Breast epithelium (tissue), 4 donors: ENCODE measurements at regions of chr9 and their contacts with region 1.

Region 1: DNA sequence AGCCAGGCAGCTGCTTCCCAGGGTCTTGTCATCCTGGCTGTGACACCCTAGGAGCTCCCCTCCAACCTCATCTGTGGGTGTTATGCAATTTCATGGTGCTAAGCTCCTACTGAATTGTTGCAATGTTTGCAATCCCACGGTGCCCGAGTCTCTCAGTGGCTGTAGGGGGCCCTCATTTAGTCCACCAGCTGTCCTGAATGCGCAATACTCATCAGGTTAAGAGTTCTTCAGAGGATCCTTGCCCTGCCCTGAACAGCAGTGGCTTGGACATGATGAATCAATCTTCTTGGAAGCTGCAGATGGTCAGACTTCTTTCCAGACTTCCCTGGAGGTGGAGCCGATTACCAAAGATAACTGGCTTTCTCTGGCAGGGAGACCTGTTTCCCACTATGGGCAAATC is 584.1 kb downstream of the CCDC171 start:
- DNase-seq: no peak
- H3K4me3 ChIP-seq: no peak overlapping the region
- H3K27ac ChIP-seq: no peak overlapping the region
- H3K4me1 ChIP-seq: no peaks in the 10 kb centered on the region
- H3K27me3 ChIP-seq: no peaks in the 10 kb centered on the region
- CTCF ChIP-seq: no peak
- POLR2A ChIP-seq: no peak

Region 2: DNA sequence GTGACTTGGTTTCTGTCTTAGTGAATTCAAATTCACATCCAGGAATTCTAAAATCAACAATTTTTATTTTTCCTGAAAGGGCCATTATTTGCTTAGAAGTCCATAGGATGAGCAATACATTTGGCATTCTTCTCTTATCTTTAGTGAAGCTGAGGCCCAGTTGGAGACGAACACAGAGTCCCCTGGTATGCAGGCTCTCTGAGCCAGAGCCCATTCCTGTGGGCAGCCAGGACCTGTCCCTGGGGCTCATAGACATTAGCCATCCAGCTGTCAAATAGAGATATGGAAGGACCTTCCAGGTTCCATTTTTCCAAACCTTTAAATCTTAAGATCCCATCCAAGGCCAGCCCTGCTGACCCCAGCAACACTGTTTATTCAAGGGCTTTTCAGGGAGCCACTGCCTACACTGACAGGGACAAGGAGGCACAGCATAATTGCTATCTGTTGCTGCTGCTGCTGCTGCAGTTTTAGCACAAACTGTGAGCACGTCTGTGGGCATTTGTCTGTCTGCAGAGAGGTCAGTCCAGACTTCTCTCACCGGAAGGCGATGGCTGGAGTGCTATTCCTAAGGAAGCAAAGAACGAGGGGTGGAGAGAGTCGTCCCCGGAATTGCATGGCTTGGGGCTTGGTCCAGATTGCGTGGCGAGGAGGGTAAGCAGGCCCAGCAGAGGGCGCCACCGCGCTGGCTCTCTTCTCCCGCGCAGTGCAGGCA is 54.9 kb after region 1 on chr9:
- intact Hi-C with region 1: loop called (anchors 2 kb)
- DNase-seq: peak in 1 of 2 donors; percentile 59
- H3K4me3 ChIP-seq: peak overlapping the region in 1 of 3 donors; percentile 19
- H3K27ac ChIP-seq: no peak overlapping the region
- H3K4me1 ChIP-seq: peaks cover 0 to 3% of the 10 kb centered on the region in 2 donors
- H3K27me3 ChIP-seq: no peaks in the 10 kb centered on the region
- CTCF ChIP-seq: peak in 1 of 3 donors; percentile 62
- POLR2A ChIP-seq: no peak

Region 3: GRCh38 chr9:16425562-16426231 is 288.7 kb after region 1 on chr9:
- intact Hi-C with region 1: no loop called
- DNase-seq: no peak
- H3K4me3 ChIP-seq: no peak overlapping the region
- H3K27ac ChIP-seq: no peak overlapping the region
- H3K4me1 ChIP-seq: no peaks in the 10 kb centered on the region
- H3K27me3 ChIP-seq: no peaks in the 10 kb centered on the region
- CTCF ChIP-seq: no peak
- POLR2A ChIP-seq: no peak